ENCODE measurements at regions of chr1 and their contacts with region 1.

Region 1: GRCh38 chr1:119647734-119648619 is at the start of gene ZNF697:
- DNase-seq: peak; percentile 96
- H3K4me3 ChIP-seq: peak within 1 kb of the TSS; percentile 97 to 98
- H3K27ac ChIP-seq: peak within 1 kb of the TSS; percentile 96
- H3K4me1 ChIP-seq: peaks cover 5 to 11% of the 10 kb centered on the region in 2 experiments; a peak in 3 of 4 replicates
- H3K27me3 ChIP-seq: no peaks in the 10 kb centered on the region
- CTCF ChIP-seq: peak; percentile 41; the same call in 1 of the 2 replicates
- EP300 ChIP-seq: no peak
- RAD21 ChIP-seq: peak; percentile 68; the same call in 1 of the 2 replicates
- polyA plus RNA-seq, gene ZNF697: 3.4 and 4.1 TPM in 2 replicates

Region 2: DNA sequence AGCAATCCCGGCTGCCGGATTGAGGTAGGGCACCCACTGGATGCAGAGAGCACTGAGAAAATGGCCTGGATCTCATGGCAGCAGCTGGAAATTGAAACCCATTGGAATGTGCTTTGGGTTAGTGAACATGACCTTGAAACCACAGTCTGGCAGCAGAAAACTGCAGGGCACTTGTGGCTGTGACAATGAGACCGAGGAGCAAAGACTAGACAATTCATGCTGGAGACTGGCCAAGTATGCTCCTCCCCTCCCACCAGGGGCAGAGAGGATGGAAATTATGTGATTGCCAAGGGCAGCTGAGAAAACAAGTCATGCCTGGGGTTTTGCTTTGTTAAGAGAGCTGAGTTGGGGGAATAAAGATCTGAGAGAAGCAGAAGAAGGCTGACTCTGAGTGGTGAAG is 60.6 kb before region 1 on chr1:
- CTCF ChIA-PET with region 1: no interaction called
- POLR2A ChIA-PET with region 1: no interaction called
- DNase-seq: no peak
- H3K4me3 ChIP-seq: no peak overlapping the region
- H3K27ac ChIP-seq: no peak overlapping the region
- H3K4me1 ChIP-seq: no peaks in the 10 kb centered on the region
- H3K27me3 ChIP-seq: no peaks in the 10 kb centered on the region
- CTCF ChIP-seq: no peak
- EP300 ChIP-seq: no peak
- RAD21 ChIP-seq: no peak

Region 3: DNA sequence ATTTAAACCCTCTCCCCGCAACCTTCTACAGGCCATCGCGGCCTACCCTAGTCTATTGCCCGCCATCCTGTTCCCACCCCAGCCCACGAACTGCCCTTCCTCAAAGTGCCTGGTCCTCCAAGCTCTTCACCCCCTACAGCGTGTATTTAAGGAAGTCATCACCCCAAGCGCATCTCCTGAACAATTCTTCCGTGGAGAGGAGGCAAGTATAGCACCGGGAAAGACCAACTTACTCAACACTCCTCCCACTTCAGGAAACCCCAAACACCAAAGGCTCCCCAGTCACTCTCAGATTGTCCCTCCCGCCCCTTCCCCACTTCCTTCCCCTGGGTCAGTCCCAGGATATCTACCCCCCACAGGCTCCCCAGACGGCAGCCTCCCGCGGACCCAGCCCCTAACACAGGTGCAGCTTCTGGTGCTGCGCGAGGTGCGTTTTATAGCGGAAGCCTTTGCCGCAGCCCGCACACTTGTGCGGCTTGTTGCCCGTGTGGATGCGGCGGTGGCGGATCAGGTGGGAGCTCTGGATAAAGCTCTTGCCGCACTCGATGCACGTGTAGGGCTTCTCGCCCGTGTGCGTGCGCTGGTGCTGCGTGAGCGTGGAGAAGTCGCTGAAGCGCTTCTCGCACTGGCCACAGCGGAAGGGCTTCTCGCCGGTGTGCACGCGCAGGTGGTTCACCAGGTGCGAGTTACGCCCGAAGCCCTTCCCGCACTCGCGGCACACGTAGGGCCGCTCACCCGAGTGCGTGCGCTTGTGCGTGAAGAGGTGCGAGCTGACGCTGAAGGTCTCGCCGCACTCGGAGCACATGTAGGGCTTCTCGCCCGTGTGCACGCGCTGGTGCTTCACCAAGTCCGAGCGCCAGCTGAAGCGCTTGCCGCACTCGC is 25.4 kb before region 1 on chr1:
- CTCF ChIA-PET with region 1: interaction called, 66 read pairs
- POLR2A ChIA-PET with region 1: interaction called, 3 read pairs
- DNase-seq: no peak
- H3K4me3 ChIP-seq: no peak overlapping the region
- H3K27ac ChIP-seq: no peak overlapping the region
- H3K4me1 ChIP-seq: peaks cover 2 to 4% of the 10 kb centered on the region in 2 experiments; a peak in 1 of 4 replicates
- H3K27me3 ChIP-seq: no peaks in the 10 kb centered on the region
- CTCF ChIP-seq: no peak
- EP300 ChIP-seq: no peak
- RAD21 ChIP-seq: no peak

Region 4: GRCh38 chr1:119631433-119632102 is 16.4 kb before region 1 on chr1:
- CTCF ChIA-PET with region 1: interaction called, 63 read pairs
- POLR2A ChIA-PET with region 1: interaction called, 8 read pairs
- DNase-seq: peak; percentile 96
- H3K4me3 ChIP-seq: peak overlapping the region in 1 of 2 experiments; percentile 24; a peak in 2 of 4 replicates
- H3K27ac ChIP-seq: peak overlapping the region; percentile 58 to 67
- H3K4me1 ChIP-seq: peaks cover 22 to 28% of the 10 kb centered on the region in 2 experiments
- H3K27me3 ChIP-seq: no peaks in the 10 kb centered on the region
- CTCF ChIP-seq: no peak
- EP300 ChIP-seq: peak; percentile 61 to 78
- RAD21 ChIP-seq: peak; percentile 16; the same call in 1 of the 2 replicates

Region 5: DNA sequence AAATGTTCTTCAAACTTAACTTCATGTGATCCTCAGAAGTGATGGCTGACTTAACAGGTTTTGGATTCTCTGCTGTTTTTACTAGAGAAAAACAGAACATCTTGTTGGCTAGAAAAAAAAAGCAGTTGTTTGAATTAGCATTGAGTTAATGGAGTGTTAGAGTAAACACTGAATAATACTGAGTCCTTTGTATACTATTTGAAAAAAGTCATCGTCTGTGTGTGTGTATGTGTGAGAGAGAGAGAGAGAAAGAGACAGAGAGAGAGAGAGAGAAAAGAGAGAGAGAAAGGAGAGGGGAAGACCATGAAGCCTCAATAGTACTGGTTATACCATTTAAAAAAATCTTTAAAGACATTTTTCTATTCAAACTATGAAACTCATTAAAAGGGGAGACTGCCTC is 10.3 kb before region 1 on chr1:
- CTCF ChIA-PET with region 1: interaction called, 63 read pairs
- POLR2A ChIA-PET with region 1: interaction called, 5 read pairs
- DNase-seq: no peak
- H3K4me3 ChIP-seq: no peak overlapping the region
- H3K27ac ChIP-seq: no peak overlapping the region
- H3K4me1 ChIP-seq: peaks cover 3 to 9% of the 10 kb centered on the region in 2 experiments; a peak in 3 of 4 replicates
- H3K27me3 ChIP-seq: no peaks in the 10 kb centered on the region
- CTCF ChIP-seq: no peak
- EP300 ChIP-seq: no peak
- RAD21 ChIP-seq: no peak

Region 6: GRCh38 chr1:119662034-119662437 is 14.1 kb after region 1 on chr1:
- CTCF ChIA-PET with region 1: interaction called, 43 read pairs
- POLR2A ChIA-PET with region 1: interaction called, 8 read pairs
- DNase-seq: no peak
- H3K4me3 ChIP-seq: no peak overlapping the region
- H3K27ac ChIP-seq: no peak overlapping the region
- H3K4me1 ChIP-seq: no peaks in the 10 kb centered on the region
- H3K27me3 ChIP-seq: no peaks in the 10 kb centered on the region
- CTCF ChIP-seq: no peak
- EP300 ChIP-seq: no peak
- RAD21 ChIP-seq: no peak

Measured in SK-N-SH (cell line).